ENCODE measurements at regions of chr16 and their contacts with region 1.

Region 1: GRCh38 chr16:50024684-50025536 is at the start of gene CNEP1R1:
- DNase-seq: peak; percentile 99
- H3K4me3 ChIP-seq: peak within 1 kb of the TSS; percentile 84 to 89
- H3K27ac ChIP-seq: peak within 1 kb of the TSS; percentile 21 to 81; a peak in 3 of 4 replicates
- H3K4me1 ChIP-seq: peaks cover 5 to 14% of the 10 kb centered on the region in 2 experiments; a peak in 3 of 4 replicates
- H3K27me3 ChIP-seq: no peaks in the 10 kb centered on the region
- CTCF ChIP-seq: peak; percentile 99
- EP300 ChIP-seq: no peak; a peak in 1 of 4 replicates
- RAD21 ChIP-seq: peak; percentile 88
- polyA plus RNA-seq, gene CNEP1R1: 19.2 and 21.6 TPM in 2 replicates

Region 2: DNA sequence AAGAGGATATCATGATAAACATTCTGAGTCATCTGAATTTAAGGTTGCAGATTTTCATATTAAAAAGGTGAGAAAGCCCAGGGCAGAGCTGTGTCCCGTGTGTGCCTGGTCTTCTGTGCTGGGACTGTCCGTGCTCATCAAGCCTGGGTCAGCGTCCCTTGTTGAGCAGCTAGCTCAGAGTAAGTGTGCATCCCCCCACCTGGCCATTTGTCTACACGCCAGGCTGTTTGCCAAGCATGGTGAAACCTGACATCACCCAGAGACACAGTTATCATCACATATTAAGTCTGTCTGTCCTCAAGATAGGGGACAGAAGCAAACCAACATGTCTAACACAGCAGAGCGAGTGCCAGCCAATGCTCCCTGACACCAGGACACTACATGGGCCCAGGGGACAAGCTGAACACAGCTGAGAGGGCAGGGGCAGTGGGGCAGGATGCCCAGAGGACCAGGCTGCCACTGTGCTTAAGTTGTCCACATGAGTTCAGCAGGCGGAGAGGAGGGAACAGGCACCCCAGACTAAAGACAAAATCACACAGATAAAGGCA is 57.8 kb before region 1 on chr16:
- CTCF ChIA-PET with region 1: interaction called, 15 read pairs
- POLR2A ChIA-PET with region 1: interaction called, 4 read pairs
- DNase-seq: peak; percentile 74
- H3K4me3 ChIP-seq: no peak overlapping the region
- H3K27ac ChIP-seq: peak overlapping the region in 1 of 2 experiments; percentile 80; a peak in 2 of 4 replicates
- H3K4me1 ChIP-seq: peaks cover 0 to 28% of the 10 kb centered on the region in 2 experiments; a peak in 1 of 4 replicates
- H3K27me3 ChIP-seq: peaks cover 6% of the 10 kb centered on the region; the same call in 1 of the 2 replicates
- CTCF ChIP-seq: no peak
- EP300 ChIP-seq: peak in 1 of 2 experiments; percentile 70; a peak in 2 of 4 replicates
- RAD21 ChIP-seq: no peak; the same call in 1 of the 2 replicates

Region 3: GRCh38 chr16:50011707-50012106 is 13.2 kb before region 1 on chr16:
- CTCF ChIA-PET with region 1: interaction called, 34 read pairs
- POLR2A ChIA-PET with region 1: no interaction called
- DNase-seq: no peak
- H3K4me3 ChIP-seq: no peak overlapping the region
- H3K27ac ChIP-seq: no peak overlapping the region
- H3K4me1 ChIP-seq: no peaks in the 10 kb centered on the region
- H3K27me3 ChIP-seq: no peaks in the 10 kb centered on the region; the same call in 1 of the 2 replicates
- CTCF ChIP-seq: no peak
- EP300 ChIP-seq: no peak
- RAD21 ChIP-seq: no peak

Region 4: DNA sequence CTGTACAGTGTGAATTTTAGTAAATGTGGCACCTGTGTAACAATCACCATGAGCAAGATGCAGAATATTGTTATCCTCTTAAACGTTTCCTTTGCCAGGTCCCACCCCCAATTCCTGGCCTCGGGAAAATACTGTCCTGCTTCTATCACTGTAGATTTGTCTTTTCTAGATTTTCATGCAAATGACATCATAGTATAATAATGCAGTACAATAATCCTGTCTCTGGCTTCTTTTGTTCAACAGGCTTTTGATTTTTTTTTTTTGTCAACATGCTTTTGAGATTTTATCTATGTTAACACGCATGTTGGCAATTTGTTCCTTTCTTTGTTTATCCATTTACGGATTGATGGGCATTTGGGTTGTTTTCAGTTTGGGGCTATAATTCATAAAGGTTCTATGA is 20.5 kb after region 1 on chr16:
- CTCF ChIA-PET with region 1: interaction called, 22 read pairs
- POLR2A ChIA-PET with region 1: interaction called, 3 read pairs
- DNase-seq: no peak
- H3K4me3 ChIP-seq: no peak overlapping the region
- H3K27ac ChIP-seq: no peak overlapping the region
- H3K4me1 ChIP-seq: peaks cover 0 to 2% of the 10 kb centered on the region in 2 experiments; a peak in 1 of 4 replicates
- H3K27me3 ChIP-seq: no peaks in the 10 kb centered on the region
- CTCF ChIP-seq: no peak
- EP300 ChIP-seq: no peak
- RAD21 ChIP-seq: no peak

Region 5: GRCh38 chr16:50210266-50211038 is 185.5 kb after region 1 on chr16:
- CTCF ChIA-PET with region 1: interaction called, 82 read pairs
- POLR2A ChIA-PET with region 1: interaction called, 8 read pairs
- DNase-seq: peak; percentile 68
- H3K4me3 ChIP-seq: no peak overlapping the region; a peak in 1 of 4 replicates
- H3K27ac ChIP-seq: peak overlapping the region; percentile 47 to 71
- H3K4me1 ChIP-seq: peaks cover 29 to 35% of the 10 kb centered on the region in 2 experiments
- H3K27me3 ChIP-seq: no peaks in the 10 kb centered on the region
- CTCF ChIP-seq: peak; percentile 83
- EP300 ChIP-seq: no peak
- RAD21 ChIP-seq: peak; percentile 87

Region 6: DNA sequence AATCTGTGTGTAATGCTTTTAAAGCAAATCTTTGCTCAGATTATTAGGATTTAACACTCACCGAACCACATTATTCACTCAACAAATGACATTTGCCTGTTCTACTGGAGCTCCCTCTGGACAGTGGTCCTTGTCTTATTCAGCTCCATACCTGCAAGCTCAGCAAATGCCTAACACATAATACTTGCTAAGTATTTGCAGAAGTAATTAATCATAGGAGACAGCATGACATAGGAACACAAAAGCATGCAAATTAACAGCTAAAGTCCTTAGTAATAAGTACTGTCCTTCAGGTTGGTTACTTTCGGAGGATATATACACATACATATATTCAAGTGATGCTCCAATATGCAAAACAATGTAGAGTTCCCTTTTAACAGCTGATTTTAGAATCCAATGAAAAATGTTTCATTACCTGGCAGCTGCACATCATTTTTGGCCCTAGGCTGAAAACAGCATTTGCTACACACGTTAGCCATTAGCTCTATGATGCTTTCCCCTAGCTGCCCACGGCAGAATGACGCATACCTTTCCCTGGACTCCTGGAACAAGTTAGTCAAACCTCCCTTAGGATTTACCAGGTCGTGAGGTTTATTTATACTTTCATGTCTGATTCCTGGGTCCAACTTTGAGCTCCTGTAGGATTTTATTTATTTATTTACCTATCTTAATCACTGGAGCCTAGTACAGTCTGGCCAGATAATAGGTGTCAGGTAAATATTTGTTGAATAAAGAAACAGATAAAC is 335.3 kb after region 1 on chr16:
- CTCF ChIA-PET with region 1: interaction called, 18 read pairs
- POLR2A ChIA-PET with region 1: no interaction called
- DNase-seq: no peak
- H3K4me3 ChIP-seq: no peak overlapping the region
- H3K27ac ChIP-seq: peak overlapping the region in 1 of 2 experiments; percentile 22; a peak in 1 of 4 replicates
- H3K4me1 ChIP-seq: peaks cover 0 to 6% of the 10 kb centered on the region in 2 experiments; a peak in 2 of 4 replicates
- H3K27me3 ChIP-seq: no peaks in the 10 kb centered on the region
- CTCF ChIP-seq: no peak
- EP300 ChIP-seq: no peak
- RAD21 ChIP-seq: no peak